ENCODE measurements at regions of chr17 and their contacts with region 1.

Region 1: DNA sequence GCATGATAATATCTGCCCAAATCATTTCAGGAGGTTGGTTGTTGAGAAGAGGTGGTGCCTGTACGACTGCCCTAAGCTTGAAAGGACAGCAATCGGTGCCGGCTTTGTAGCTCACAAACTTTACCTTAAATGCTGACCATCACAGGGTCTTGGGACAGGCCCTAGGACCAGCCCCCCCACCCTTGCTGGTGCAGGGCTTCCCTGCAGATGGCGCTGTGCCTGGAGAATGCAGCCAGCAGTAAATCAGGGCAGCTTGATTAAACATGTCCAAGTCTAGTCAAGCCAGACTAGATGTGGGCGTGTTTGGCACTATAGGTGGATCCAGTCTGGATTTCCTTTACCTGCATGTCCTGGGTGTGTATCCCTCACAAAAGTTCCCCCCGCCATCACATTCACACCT is 135.5 kb upstream of the CRHR1 start:
- DNase-seq: peak in 1 of 2 experiments; percentile 88
- H3K4me3 ChIP-seq: no peak overlapping the region
- H3K27ac ChIP-seq: no peak overlapping the region
- H3K4me1 ChIP-seq: peaks cover 0 to 5% (median under 1%) of the 10 kb centered on the region in 4 experiments; a peak in 3 of 7 replicates
- H3K27me3 ChIP-seq: no peaks in the 10 kb centered on the region
- CTCF ChIP-seq: peak; percentile 82 to 92 (median 91)
- EP300 ChIP-seq: no peak
- POLR2A ChIP-seq: no peak
- RAD21 ChIP-seq: peak; percentile 60 to 75

Region 2: DNA sequence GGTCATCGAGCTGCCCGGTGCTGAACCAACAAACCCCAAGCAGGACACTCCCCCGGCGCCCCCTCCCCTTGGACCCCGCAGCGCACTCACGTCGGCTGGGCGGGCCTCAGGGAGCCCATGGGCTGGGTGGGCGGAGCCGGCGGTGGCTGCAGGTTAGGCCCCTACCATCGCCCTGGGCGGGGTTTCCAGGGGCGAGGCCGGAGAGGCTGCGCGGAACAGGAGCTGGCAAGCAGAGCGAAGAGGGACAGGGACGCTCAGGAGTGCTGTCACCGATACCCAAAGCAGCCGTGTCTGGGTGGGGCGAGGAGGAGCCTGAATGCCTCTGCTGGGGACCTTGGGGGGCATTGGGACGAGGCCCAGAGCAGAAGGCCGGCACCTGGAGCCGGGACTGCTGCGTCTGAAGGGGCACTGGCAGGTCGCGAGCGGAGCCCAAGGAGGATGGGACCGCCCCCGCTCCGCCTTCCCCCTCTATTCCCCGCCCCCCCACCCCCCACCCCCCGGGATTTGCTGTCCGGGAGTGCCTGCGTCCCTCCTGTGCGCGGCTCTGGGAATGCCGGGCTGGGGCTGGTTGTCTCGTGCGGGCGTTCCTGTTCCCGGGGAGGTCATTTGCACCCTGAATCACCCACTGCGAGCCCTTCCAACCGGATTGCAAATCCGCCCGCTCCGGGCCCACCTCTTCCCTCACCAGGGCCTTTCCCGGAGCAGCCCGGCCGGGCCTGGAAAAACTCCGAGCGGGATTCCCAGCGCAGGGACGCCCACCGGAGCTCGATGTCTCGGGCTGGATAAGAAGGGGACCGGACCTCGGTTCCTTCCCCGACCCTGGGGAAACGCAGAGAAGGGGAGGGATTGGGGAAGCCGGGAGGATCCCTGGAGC is 216.9 kb before region 1 on chr17:
- CTCF ChIA-PET with region 1: no interaction called
- POLR2A ChIA-PET with region 1: no interaction called
- DNase-seq: peak; percentile 63 to 95
- H3K4me3 ChIP-seq: peak overlapping the region; percentile 54 to 65 (median 56)
- H3K27ac ChIP-seq: no peak overlapping the region
- H3K4me1 ChIP-seq: peaks cover 6 to 22% (median 14%) of the 10 kb centered on the region in 4 experiments
- H3K27me3 ChIP-seq: peaks cover 21 to 49% (median 43%) of the 10 kb centered on the region in 4 experiments
- CTCF ChIP-seq: no peak
- EP300 ChIP-seq: no peak
- POLR2A ChIP-seq: no peak
- RAD21 ChIP-seq: no peak

Region 3: DNA sequence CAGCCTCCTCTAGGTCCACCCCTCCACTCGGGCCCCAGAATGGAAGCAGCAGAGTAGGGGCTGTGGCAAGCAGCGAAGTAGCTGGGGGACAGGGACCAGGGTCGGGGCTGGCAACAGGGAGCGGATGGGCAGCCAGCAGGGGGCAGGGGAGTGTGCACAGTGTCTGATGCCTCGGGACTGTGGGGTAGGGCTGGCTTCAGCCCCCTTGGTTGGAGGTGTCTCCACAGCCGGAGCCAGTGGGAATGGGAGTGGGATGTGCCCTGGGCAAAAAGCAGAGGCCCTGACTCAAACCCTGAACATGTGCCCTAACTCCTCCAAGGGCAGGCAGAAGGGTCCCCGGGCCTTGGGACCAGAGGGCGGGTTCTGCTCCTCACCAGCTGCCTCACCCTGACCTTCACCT is 197.5 kb before region 1 on chr17:
- CTCF ChIA-PET with region 1: no interaction called
- POLR2A ChIA-PET with region 1: no interaction called
- DNase-seq: no peak
- H3K4me3 ChIP-seq: no peak overlapping the region
- H3K27ac ChIP-seq: no peak overlapping the region
- H3K4me1 ChIP-seq: no peaks in the 10 kb centered on the region
- H3K27me3 ChIP-seq: no peaks in the 10 kb centered on the region
- CTCF ChIP-seq: peak; percentile 16 to 59 (median 25); a peak in 3 of 4 replicates
- EP300 ChIP-seq: no peak
- POLR2A ChIP-seq: no peak
- RAD21 ChIP-seq: no peak; a peak in 1 of 4 replicates

Region 4: GRCh38 chr17:45666046-45666600 is 17.5 kb after region 1 on chr17:
- CTCF ChIA-PET with region 1: interaction called, 41 read pairs
- POLR2A ChIA-PET with region 1: interaction called, 3 read pairs
- DNase-seq: no peak
- H3K4me3 ChIP-seq: no peak overlapping the region
- H3K27ac ChIP-seq: no peak overlapping the region
- H3K4me1 ChIP-seq: no peaks in the 10 kb centered on the region
- H3K27me3 ChIP-seq: no peaks in the 10 kb centered on the region; a peak in 3 of 7 replicates
- CTCF ChIP-seq: peak; percentile 54 to 65 (median 54)
- EP300 ChIP-seq: no peak
- POLR2A ChIP-seq: no peak
- RAD21 ChIP-seq: peak; percentile 78

Region 5: GRCh38 chr17:45688353-45688752 is 39.7 kb after region 1 on chr17:
- CTCF ChIA-PET with region 1: interaction called, 13 read pairs
- POLR2A ChIA-PET with region 1: interaction called, 3 read pairs
- DNase-seq: no peak
- H3K4me3 ChIP-seq: no peak overlapping the region
- H3K27ac ChIP-seq: no peak overlapping the region
- H3K4me1 ChIP-seq: no peaks in the 10 kb centered on the region
- H3K27me3 ChIP-seq: peaks cover 0 to 5% (median 0%) of the 10 kb centered on the region in 4 experiments; a peak in 3 of 7 replicates
- CTCF ChIP-seq: no peak
- EP300 ChIP-seq: no peak
- POLR2A ChIP-seq: no peak
- RAD21 ChIP-seq: no peak

Region 6: GRCh38 chr17:45705123-45706009 is 56.7 kb after region 1 on chr17:
- CTCF ChIA-PET with region 1: interaction called, 17 read pairs
- POLR2A ChIA-PET with region 1: no interaction called
- DNase-seq: no peak
- H3K4me3 ChIP-seq: no peak overlapping the region
- H3K27ac ChIP-seq: no peak overlapping the region
- H3K4me1 ChIP-seq: peaks cover 0 to 18% (median 8%) of the 10 kb centered on the region in 4 experiments; a peak in 6 of 7 replicates
- H3K27me3 ChIP-seq: peaks cover 0 to 2% (median 0%) of the 10 kb centered on the region in 4 experiments; a peak in 2 of 7 replicates
- CTCF ChIP-seq: no peak
- EP300 ChIP-seq: no peak
- POLR2A ChIP-seq: no peak
- RAD21 ChIP-seq: no peak

Region 7: DNA sequence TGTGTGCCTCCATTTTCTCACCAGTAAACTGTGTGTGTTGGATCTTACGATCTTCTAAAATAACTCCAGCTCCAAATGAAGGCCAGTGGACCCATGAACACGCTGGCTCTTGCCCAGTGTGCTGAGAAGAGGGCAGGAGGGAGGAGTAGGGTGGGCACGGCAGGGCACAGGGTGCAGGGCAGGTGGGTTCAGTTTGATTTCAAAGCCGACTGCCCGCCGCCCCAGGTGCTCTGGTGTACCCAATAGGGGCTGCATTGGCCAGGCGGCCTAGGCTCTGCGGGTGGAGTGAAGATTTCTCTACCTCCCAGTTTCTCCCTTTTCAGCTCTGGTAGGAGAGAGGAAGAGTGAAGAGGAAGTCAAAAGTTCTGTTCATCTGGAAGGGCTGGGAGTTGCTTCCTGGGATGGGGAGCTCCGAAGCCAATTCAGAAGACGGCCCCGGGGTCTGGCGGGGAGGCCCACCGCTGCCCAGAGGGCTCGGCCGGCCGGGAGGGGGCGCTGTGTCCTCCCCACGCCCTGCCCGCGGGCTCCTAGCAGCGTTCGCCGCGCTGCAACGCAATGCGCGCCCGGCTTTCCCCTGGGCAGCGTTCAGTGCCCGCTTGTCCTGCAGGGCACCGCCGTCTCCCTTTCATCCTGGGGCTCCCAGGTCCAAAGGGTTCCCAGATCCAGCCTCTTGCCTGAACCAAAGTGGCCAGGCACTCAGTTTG is 134.4 kb after region 1 on chr17:
- CTCF ChIA-PET with region 1: interaction called, 13 read pairs
- POLR2A ChIA-PET with region 1: no interaction called
- DNase-seq: peak in 1 of 2 experiments; percentile 93
- H3K4me3 ChIP-seq: peak overlapping the region; percentile 48 to 96 (median 76)
- H3K27ac ChIP-seq: no peak overlapping the region
- H3K4me1 ChIP-seq: peaks cover 0 to 19% (median 6%) of the 10 kb centered on the region in 4 experiments; a peak in 6 of 7 replicates
- H3K27me3 ChIP-seq: peaks cover 12 to 57% (median 49%) of the 10 kb centered on the region in 4 experiments
- CTCF ChIP-seq: peak; percentile 81 to 90 (median 87)
- EP300 ChIP-seq: no peak
- POLR2A ChIP-seq: no peak
- RAD21 ChIP-seq: peak; percentile 48 to 67; a peak in 3 of 4 replicates

Region 8: GRCh38 chr17:45823598-45823997 is 175.0 kb after region 1 on chr17:
- CTCF ChIA-PET with region 1: interaction called, 11 read pairs
- POLR2A ChIA-PET with region 1: no interaction called
- DNase-seq: no peak
- H3K4me3 ChIP-seq: no peak overlapping the region
- H3K27ac ChIP-seq: no peak overlapping the region
- H3K4me1 ChIP-seq: peaks cover 0 to 3% (median 0%) of the 10 kb centered on the region in 4 experiments; a peak in 1 of 7 replicates
- H3K27me3 ChIP-seq: no peaks in the 10 kb centered on the region; a peak in 1 of 7 replicates
- CTCF ChIP-seq: no peak
- EP300 ChIP-seq: no peak
- POLR2A ChIP-seq: no peak
- RAD21 ChIP-seq: no peak

Region 9: GRCh38 chr17:45852535-45853297 is 204.1 kb after region 1 on chr17:
- CTCF ChIA-PET with region 1: interaction called, 15 read pairs
- POLR2A ChIA-PET with region 1: no interaction called
- DNase-seq: peak; percentile 13 to 86
- H3K4me3 ChIP-seq: no peak overlapping the region
- H3K27ac ChIP-seq: no peak overlapping the region
- H3K4me1 ChIP-seq: 0 out of 7 replicates have a peak, but pooled peaks cover 0 to 3% (median 0%) of the 10 kb centered on the region in 4 experiments
- H3K27me3 ChIP-seq: peaks cover 0 to 4% (median 0%) of the 10 kb centered on the region in 4 experiments; a peak in 2 of 7 replicates
- CTCF ChIP-seq: peak; percentile 49 to 91 (median 87)
- EP300 ChIP-seq: no peak
- POLR2A ChIP-seq: no peak
- RAD21 ChIP-seq: peak; percentile 88 to 93